ENCODE measurements at regions of chr17 and their contacts with region 1.

Region 1: GRCh38 chr17:18974407-18975132 is 22.6 kb downstream of the SLC5A10 start:
- DNase-seq: no peak
- ATAC-seq: no peak
- H3K4me3 ChIP-seq: no peak overlapping the region
- H3K4me3 Mint-ChIP-seq: no peak overlapping the region
- H3K27ac ChIP-seq: no peak overlapping the region
- H3K27ac Mint-ChIP-seq: no peak overlapping the region
- H3K4me1 ChIP-seq: no peaks in the 10 kb centered on the region
- H3K4me1 Mint-ChIP-seq: peaks cover 3% of the 10 kb centered on the region
- H3K27me3 ChIP-seq: no peaks in the 10 kb centered on the region
- H3K27me3 Mint-ChIP-seq: no peaks in the 10 kb centered on the region
- CTCF ChIP-seq: no peak

Region 2: DNA sequence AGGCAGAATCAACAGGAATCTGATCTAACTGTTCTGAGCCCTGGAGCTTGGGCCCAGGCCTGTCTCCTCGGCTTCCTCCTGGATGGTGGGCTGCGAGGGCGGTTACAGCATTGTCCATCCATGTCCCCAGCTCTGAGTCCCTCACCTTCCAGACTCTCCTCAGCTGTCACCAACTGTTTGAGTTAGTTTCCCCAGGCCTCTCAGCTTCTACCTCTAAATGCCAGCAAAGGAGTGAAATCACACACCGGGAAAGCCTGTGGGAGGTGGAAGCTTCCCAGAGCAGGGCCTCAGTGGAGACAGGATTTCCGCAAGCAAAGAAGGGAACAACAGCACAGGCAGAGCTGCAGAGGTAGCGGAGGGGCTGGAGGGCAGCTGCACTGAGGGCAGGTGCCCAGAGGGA is 126.1 kb before region 1 on chr17:
- CTCF ChIA-PET with region 1: no interaction called
- POLR2A ChIA-PET with region 1: no interaction called
- intact Hi-C with region 1: no loop called
- DNase-seq: no peak
- ATAC-seq: no peak
- H3K4me3 ChIP-seq: no peak overlapping the region
- H3K4me3 Mint-ChIP-seq: no peak overlapping the region
- H3K27ac ChIP-seq: no peak overlapping the region
- H3K27ac Mint-ChIP-seq: no peak overlapping the region
- H3K4me1 ChIP-seq: no peaks in the 10 kb centered on the region
- H3K4me1 Mint-ChIP-seq: no peaks in the 10 kb centered on the region
- H3K27me3 ChIP-seq: no peaks in the 10 kb centered on the region
- H3K27me3 Mint-ChIP-seq: no peaks in the 10 kb centered on the region
- CTCF ChIP-seq: no peak

Region 3: DNA sequence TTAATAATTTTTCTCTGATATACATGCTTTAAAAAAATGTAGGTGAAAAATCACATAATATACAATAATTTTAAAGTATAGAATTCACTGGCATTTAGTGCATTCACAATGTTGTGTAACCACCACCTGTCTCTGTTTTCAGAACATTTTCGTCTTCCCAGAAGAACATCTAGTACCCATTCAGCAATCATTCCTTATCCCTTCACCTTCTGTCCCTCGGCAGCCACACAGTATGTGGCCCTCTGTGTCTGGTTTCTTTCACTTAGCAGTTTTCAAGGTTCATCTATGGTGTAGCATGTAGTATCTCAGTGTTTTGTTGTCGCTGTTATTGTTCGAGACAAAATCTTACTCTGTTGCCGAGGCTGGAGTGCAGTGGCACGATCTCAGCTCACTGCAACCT is 83.0 kb before region 1 on chr17:
- CTCF ChIA-PET with region 1: no interaction called
- POLR2A ChIA-PET with region 1: no interaction called
- intact Hi-C with region 1: no loop called
- DNase-seq: no peak
- ATAC-seq: no peak
- H3K4me3 ChIP-seq: no peak overlapping the region
- H3K4me3 Mint-ChIP-seq: no peak overlapping the region
- H3K27ac ChIP-seq: no peak overlapping the region
- H3K27ac Mint-ChIP-seq: peak overlapping the region; percentile 68
- H3K4me1 ChIP-seq: no peaks in the 10 kb centered on the region
- H3K4me1 Mint-ChIP-seq: peaks cover 20% of the 10 kb centered on the region
- H3K27me3 ChIP-seq: no peaks in the 10 kb centered on the region
- H3K27me3 Mint-ChIP-seq: no peaks in the 10 kb centered on the region
- CTCF ChIP-seq: no peak

Region 4: DNA sequence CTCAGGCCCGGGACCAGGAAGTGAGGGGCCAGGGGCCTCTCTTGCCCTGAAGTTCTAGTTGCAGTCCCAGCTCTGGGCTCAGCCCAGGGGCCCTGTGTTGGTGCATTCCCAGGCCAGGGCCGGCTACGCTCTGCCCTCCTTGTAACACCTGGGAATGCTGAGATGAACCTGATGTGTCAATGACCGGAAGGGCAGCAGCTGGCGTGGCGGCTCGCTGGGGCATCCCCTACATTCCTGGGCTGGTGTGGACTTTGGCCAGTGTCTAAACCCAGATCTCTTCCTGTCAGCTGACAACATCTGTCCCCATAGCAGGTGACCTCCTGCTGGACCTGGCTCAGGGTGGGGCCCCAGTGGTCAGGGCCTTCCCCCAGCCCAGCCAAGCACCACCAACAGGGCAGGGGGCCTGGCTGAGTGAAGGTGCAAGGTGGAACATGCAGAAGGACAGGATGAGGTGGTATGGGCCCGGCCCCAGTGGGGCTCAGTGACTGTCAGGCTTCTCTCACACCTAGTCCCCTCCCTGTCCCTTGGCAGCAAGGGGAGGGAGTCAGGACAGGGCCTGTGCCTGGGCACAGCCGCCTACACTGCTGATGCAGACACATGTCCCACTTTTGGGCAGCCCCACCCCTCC is 14.1 kb after region 1 on chr17:
- CTCF ChIA-PET with region 1: no interaction called
- POLR2A ChIA-PET with region 1: no interaction called
- intact Hi-C with region 1: no loop called
- DNase-seq: no peak
- ATAC-seq: no peak
- H3K4me3 ChIP-seq: no peak overlapping the region
- H3K4me3 Mint-ChIP-seq: no peak overlapping the region
- H3K27ac ChIP-seq: no peak overlapping the region
- H3K27ac Mint-ChIP-seq: no peak overlapping the region
- H3K4me1 ChIP-seq: peaks cover 25% of the 10 kb centered on the region
- H3K4me1 Mint-ChIP-seq: peaks cover 33% of the 10 kb centered on the region
- H3K27me3 ChIP-seq: no peaks in the 10 kb centered on the region
- H3K27me3 Mint-ChIP-seq: no peaks in the 10 kb centered on the region
- CTCF ChIP-seq: no peak

Region 5: GRCh38 chr17:19019036-19019941 is 44.7 kb after region 1 on chr17:
- CTCF ChIA-PET with region 1: no interaction called
- POLR2A ChIA-PET with region 1: interaction called, 3 read pairs
- intact Hi-C with region 1: loop called in 1 of 2 experiments (anchors 5 kb)
- DNase-seq: no peak
- ATAC-seq: no peak
- H3K4me3 ChIP-seq: no peak overlapping the region
- H3K4me3 Mint-ChIP-seq: no peak overlapping the region
- H3K27ac ChIP-seq: no peak overlapping the region
- H3K27ac Mint-ChIP-seq: peak overlapping the region; percentile 64
- H3K4me1 ChIP-seq: peaks cover 10% of the 10 kb centered on the region
- H3K4me1 Mint-ChIP-seq: peaks cover 20% of the 10 kb centered on the region
- H3K27me3 ChIP-seq: no peaks in the 10 kb centered on the region
- H3K27me3 Mint-ChIP-seq: no peaks in the 10 kb centered on the region
- CTCF ChIP-seq: no peak